ENCODE measurements at regions of chr1 and their contacts with region 1.

Region 1: DNA sequence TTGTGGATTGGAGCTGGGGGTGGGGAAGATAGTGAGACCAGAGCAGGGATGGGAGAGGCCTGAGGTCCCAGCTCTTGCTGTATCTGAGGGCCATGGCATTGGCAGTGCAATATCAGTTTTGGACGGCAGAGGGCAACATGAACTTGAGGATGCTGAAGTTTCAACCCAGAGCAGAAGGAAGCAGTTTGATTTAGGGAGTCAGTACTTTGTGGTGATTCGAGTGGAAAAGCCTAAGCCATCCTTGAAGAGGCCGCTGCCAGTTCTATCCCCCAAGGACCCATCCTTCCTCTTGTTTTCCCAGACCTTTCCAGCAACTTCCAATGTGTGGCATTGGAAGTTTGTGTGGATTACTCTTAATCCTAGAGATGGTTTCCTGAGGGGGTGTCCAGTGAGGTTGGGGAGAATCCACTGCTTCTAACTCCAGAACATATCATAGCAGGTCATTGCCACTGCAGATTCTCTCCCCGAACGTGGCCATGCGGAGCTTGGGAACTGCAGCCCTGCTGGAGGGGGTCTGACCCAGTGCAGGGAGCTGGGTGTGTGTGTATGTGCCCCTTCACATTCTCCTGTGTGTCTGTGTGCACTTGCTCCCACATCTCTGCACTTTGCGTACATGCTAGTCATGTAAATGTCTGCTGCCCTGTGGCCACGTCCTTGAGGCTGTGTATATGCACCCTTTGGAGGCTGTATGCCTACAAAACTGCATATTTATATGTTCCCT is 24.1 kb downstream of the SLC26A9 start:
- DNase-seq: peak; percentile 69
- H3K4me3 ChIP-seq: no peak overlapping the region
- H3K27ac ChIP-seq: no peak overlapping the region
- H3K4me1 ChIP-seq: no peaks in the 10 kb centered on the region
- CTCF ChIP-seq: peak; percentile 87

Region 2: GRCh38 chr1:205878026-205878425 is 41.2 kb before region 1 on chr1:
- CTCF ChIA-PET with region 1: no interaction called
- POLR2A ChIA-PET with region 1: no interaction called
- intact Hi-C with region 1: no loop called
- DNase-seq: no peak
- H3K4me3 ChIP-seq: no peak overlapping the region
- H3K27ac ChIP-seq: no peak overlapping the region
- H3K4me1 ChIP-seq: no peaks in the 10 kb centered on the region
- CTCF ChIP-seq: no peak

Region 3: DNA sequence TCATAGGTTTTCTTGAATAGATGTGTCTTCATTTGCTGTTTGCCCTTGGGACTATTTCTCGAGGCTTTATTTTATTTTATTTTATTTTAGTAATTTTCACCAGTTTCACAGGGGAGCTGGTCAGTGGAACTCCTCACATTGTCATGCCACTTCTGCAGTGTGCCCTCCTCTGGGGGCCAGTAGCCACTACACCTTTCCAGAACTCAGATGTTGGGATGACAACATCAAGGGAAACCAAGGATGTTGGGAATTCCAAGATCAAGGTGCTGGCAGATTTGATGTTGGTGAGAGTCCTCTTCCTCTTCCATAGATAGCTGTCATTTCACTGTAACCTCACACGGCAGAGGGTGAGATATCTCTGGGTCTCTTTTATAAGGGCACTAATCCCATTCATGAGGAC is 11.4 kb before region 1 on chr1:
- CTCF ChIA-PET with region 1: no interaction called
- POLR2A ChIA-PET with region 1: no interaction called
- intact Hi-C with region 1: no loop called
- DNase-seq: peak; percentile 10
- H3K4me3 ChIP-seq: no peak overlapping the region
- H3K27ac ChIP-seq: no peak overlapping the region
- H3K4me1 ChIP-seq: no peaks in the 10 kb centered on the region
- CTCF ChIP-seq: peak; percentile 70

Region 4: GRCh38 chr1:205977402-205978014 is 58.3 kb after region 1 on chr1:
- CTCF ChIA-PET with region 1: interaction called, 16 read pairs
- POLR2A ChIA-PET with region 1: interaction called, 3 read pairs
- intact Hi-C with region 1: loop called (anchors 1 kb)
- DNase-seq: peak; percentile 83
- H3K4me3 ChIP-seq: no peak overlapping the region
- H3K27ac ChIP-seq: no peak overlapping the region
- H3K4me1 ChIP-seq: no peaks in the 10 kb centered on the region
- CTCF ChIP-seq: peak; percentile 98

Region 5: DNA sequence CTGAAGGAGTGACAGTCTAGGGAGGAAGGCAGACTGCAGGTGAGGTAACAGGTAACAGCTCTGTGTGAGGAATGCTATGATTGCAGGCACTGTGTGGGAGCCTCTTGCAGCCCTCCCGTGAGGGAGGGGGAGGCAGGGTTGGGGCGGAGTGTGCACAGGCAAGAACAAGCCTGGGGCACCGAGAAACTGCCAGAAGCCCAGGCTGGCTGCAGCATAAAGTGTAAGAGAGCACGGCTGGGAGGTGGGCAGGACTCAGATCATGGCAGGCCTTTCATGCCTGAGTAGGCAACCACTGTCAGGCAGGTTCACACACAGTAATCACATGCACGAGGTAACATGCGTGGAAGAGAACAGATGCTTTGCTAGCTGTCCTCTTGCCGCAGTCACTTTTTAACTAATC is 122.5 kb after region 1 on chr1:
- CTCF ChIA-PET with region 1: no interaction called
- POLR2A ChIA-PET with region 1: no interaction called
- intact Hi-C with region 1: no loop called
- DNase-seq: peak; percentile 53
- H3K4me3 ChIP-seq: peak overlapping the region; percentile 36
- H3K27ac ChIP-seq: peak overlapping the region; percentile 10
- H3K4me1 ChIP-seq: peaks cover 80% of the 10 kb centered on the region
- CTCF ChIP-seq: no peak

Measured in OCI-LY7 (cell line).